ENCODE measurements at regions of chr7 and their contacts with region 1.

Region 1: DNA sequence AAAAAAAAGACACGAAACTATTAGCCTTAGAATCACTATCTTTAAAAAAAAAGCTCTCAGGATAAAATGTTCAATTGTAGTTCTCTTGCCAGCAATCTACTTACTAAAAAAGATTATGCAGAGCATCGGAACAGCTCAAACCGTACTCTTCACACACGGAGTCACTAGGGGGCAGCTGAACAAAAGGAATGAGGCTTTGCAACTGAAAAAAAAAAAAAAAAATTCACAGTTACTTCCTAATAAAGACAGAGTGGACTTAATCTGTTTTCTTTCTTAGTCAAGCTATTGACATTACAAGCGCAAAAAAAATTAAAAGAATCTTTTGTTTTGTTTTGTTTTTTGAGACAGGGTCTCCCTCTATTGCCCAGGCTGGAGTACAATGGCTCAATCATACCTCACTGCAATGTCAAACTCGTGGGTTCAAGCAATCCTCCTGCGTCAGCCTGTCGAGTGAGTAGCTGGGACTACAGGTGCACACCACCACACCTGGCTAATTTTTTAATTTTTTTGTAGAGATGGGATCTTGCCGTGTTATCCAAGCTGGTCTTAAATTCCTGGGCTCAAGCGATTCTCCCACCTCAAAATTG is 11.5 kb downstream of the PMS2 start:
- DNase-seq: peak in 1 of 2 donors; percentile 62
- ATAC-seq: peak; percentile 85
- H3K4me3 ChIP-seq: no peak overlapping the region
- H3K27ac ChIP-seq: no peak overlapping the region
- H3K4me1 ChIP-seq: no peaks in the 10 kb centered on the region
- H3K27me3 ChIP-seq: no peaks in the 10 kb centered on the region

Region 2: GRCh38 chr7:6323967-6324701 is 326.8 kb after region 1 on chr7:
- intact Hi-C with region 1: loop called in 1 of 2 experiments (anchors 10 kb)
- DNase-seq: peak in 1 of 2 donors; percentile 12
- ATAC-seq: no peak
- H3K4me3 ChIP-seq: no peak overlapping the region
- H3K27ac ChIP-seq: no peak overlapping the region
- H3K4me1 ChIP-seq: no peaks in the 10 kb centered on the region
- H3K27me3 ChIP-seq: no peaks in the 10 kb centered on the region

Region 3: GRCh38 chr7:6350433-6351058 is 353.2 kb after region 1 on chr7:
- intact Hi-C with region 1: loop called in 1 of 2 experiments (anchors 10 kb)
- DNase-seq: no peak
- ATAC-seq: no peak
- H3K4me3 ChIP-seq: no peak overlapping the region
- H3K27ac ChIP-seq: no peak overlapping the region
- H3K4me1 ChIP-seq: no peaks in the 10 kb centered on the region
- H3K27me3 ChIP-seq: no peaks in the 10 kb centered on the region

Region 4: DNA sequence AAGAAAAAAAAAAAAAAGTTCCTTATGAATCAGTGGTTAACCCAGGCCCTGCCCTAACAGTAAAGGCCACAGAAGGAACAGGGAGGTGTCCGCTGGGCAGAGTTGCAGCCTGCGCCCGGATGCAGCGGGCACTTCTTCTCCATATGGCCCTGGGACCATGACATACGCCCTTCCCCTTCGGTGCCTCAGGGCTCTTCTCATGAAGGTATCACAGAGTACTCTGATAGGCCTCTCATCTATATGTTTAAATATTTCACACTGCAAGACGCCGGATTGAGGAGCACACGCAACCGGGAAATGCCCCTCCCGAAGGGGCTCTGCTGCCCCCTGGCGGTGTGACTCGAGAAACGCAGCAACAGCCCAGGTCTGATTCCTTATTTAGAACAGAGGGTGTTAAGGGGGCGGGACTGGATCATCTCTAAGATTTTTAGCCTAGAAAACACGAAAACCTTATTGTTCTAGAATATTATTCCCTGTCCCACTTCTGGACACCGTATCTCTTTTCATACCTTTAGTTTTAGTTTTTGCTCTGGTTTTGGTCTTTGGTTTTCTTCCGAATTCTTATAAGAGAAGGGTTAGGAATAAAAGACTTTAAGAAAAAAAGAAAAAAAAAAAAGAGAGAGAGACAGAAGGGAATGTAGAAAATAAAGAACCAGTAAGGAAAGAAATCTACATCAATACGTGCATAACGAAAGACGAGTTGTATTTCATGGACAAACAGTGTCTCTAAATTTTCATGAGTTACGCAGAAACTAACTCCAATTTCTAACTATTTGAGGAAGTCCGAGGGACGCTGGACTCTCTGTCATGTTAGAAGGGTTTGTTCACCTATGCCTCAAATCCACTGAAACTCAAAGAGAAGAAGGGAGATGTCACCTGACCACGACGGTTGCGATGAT is 438.4 kb after region 1 on chr7:
- intact Hi-C with region 1: loop called (anchors 5 to 10 kb)
- DNase-seq: peak; percentile 88 to 93
- ATAC-seq: peak; percentile 90
- H3K4me3 ChIP-seq: no peak overlapping the region
- H3K27ac ChIP-seq: no peak overlapping the region
- H3K4me1 ChIP-seq: no peaks in the 10 kb centered on the region
- H3K27me3 ChIP-seq: no peaks in the 10 kb centered on the region

Measured in aorta (tissue), 5 donors.